HepG2 (cell line): ENCODE measurements at regions of chr17 and their contacts with region 1.

Region 1: GRCh38 chr17:49407981-49408501 is 6.6 kb downstream of the PHB1 start:
- DNase-seq: peak; percentile 87
- ATAC-seq: peak; percentile 98
- H3K4me3 ChIP-seq: no peak overlapping the region
- H3K27ac ChIP-seq: no peak overlapping the region
- H3K4me1 ChIP-seq: peaks cover 19% of the 10 kb centered on the region
- H3K27me3 ChIP-seq: no peaks in the 10 kb centered on the region
- CTCF ChIP-seq: peak; percentile 99
- EP300 ChIP-seq: peak in 1 of 2 experiments; percentile 27; a peak in 1 of 4 replicates
- POLR2A ChIP-seq: no peak
- RAD21 ChIP-seq: peak; percentile 98

Region 2: DNA sequence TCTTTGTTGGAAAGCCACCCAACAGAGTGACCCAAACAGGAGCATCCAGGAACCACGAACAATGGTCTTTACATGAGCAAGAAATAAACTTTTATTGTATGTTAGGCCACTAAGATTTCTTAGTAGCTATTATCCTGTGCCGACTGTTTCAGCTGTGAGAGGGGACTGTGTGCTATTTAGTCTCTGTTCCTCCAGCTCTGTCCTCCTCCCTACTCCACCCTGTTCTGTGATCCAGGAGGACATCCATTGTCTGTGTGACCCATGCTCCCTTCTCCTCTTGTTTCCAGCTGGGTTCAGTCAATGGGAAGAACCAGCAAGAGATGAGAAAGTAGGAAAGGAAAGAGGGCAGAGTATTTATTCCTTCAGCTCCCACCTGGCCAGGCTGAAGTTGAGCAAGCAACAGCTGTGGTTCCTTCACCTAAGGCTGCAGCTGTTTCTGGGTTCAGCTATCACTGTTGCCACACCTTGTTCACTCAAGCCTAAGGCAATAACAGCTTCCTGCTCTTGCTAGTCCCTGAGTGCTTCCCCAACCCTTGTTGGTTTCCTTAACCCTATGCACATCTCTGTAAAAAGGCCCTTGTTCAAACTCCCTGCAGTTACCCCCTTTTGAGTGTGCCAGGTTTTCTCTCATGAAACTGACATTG is 290.3 kb before region 1 on chr17:
- CTCF ChIA-PET with region 1: no interaction called
- POLR2A ChIA-PET with region 1: no interaction called
- in situ Hi-C with region 1: no loop called
- intact Hi-C with region 1: no loop called
- DNase-seq: no peak
- ATAC-seq: no peak
- H3K4me3 ChIP-seq: no peak overlapping the region
- H3K27ac ChIP-seq: no peak overlapping the region
- H3K4me1 ChIP-seq: no peaks in the 10 kb centered on the region
- H3K27me3 ChIP-seq: peaks cover 2 to 9% of the 10 kb centered on the region in 2 experiments; a peak in 2 of 5 replicates
- CTCF ChIP-seq: no peak
- EP300 ChIP-seq: no peak
- POLR2A ChIP-seq: no peak
- RAD21 ChIP-seq: no peak

Region 3: DNA sequence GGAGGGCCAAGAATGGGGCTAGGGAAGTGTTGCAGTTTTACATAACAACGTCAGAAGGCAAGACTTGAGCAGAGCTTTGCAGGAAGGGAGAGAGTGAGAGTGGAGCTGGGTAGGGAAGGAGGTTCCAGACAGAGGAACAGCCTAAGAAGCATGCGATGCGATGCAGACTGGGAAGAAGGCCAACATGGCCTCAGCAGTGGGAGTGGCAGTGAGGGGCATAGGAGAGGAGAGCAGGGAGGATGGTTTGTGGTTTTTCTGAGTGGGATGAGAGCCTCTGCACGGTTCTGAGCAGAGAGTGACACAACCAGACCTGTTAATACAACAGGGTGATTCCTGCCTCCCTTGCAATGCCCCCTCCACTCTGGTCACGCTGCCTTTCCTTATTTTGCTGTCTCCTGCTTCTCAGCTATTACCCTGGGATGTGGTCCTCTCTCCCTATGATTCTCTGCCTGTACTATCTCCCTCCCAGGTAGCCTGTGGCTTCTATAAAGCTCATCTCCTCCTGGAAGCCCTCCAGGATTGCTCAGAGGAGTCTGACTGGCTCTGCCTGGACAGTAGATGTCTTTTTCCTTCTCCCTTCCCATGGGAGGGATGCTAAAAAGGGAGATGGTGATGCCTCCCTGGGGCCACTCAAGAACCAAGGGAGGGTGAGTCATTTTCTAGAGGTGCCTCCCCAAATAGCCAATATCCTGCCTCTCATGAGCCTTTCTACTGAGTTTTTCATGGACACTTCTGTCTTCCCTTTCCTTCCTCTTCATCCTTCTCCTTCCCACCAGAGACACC is 48.3 kb after region 1 on chr17:
- CTCF ChIA-PET with region 1: no interaction called
- POLR2A ChIA-PET with region 1: no interaction called
- in situ Hi-C with region 1: no loop called
- intact Hi-C with region 1: loop called (anchors 5 kb)
- DNase-seq: no peak
- ATAC-seq: no peak
- H3K4me3 ChIP-seq: no peak overlapping the region
- H3K27ac ChIP-seq: no peak overlapping the region
- H3K4me1 ChIP-seq: peaks cover 50% of the 10 kb centered on the region
- H3K27me3 ChIP-seq: peaks cover 21 to 58% of the 10 kb centered on the region in 2 experiments
- CTCF ChIP-seq: no peak
- EP300 ChIP-seq: no peak
- POLR2A ChIP-seq: no peak
- RAD21 ChIP-seq: no peak